Mammary epithelial cell (primary cell): ENCODE measurements at regions of chr7 and their contacts with region 1.

Region 1: DNA sequence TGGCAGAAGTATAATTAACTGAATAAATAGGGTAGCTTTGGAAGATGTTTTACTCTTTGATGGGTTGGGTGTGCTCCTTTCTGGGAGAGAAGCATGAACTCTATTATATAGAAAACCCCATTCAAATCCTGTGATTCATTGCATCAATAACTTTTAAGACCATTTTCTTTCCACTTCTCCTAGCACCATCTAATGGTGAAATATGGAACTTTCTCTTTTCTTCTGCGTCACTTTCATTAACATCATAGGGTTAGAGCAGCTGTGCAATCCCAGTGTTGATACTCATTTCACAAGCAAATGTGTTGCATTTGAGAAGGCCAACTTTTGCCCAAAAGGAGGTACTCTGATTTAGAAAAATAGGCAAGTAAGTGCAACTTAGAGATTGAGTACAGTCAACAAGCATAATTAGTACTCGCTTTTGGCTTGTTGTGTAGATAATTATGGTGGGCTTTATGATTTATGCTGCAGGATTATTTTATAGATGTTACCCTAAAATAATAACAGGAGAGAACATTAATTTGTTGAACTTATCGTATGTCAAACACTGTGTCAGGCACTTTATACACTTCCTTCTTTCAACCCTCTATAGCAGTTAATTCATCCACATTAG is 92.9 kb downstream of the CPED1 start:
- DNase-seq: peak; percentile 67
- H3K4me3 ChIP-seq: no peak overlapping the region
- H3K27ac ChIP-seq: no peak overlapping the region
- H3K4me1 ChIP-seq: peaks cover 50% of the 10 kb centered on the region
- H3K27me3 ChIP-seq: no peaks in the 10 kb centered on the region
- CTCF ChIP-seq: peak; percentile 60 to 70

Region 2: GRCh38 chr7:120792091-120792860 is 289.2 kb before region 1 on chr7:
- CTCF ChIA-PET with region 1: no interaction called
- dilution Hi-C with region 1: no loop called
- in situ Hi-C with region 1: no loop called
- intact Hi-C with region 1: loop called (anchors 2 kb)
- DNase-seq: peak; percentile 40
- H3K4me3 ChIP-seq: no peak overlapping the region
- H3K27ac ChIP-seq: no peak overlapping the region
- H3K4me1 ChIP-seq: peaks cover 7% of the 10 kb centered on the region
- H3K27me3 ChIP-seq: peaks cover 2% of the 10 kb centered on the region
- CTCF ChIP-seq: peak; percentile 71 to 75

Region 3: GRCh38 chr7:120987683-120988590 is 93.5 kb before region 1 on chr7:
- CTCF ChIA-PET with region 1: interaction called, 10 read pairs
- dilution Hi-C with region 1: no loop called
- in situ Hi-C with region 1: loop called (anchors 10 kb)
- intact Hi-C with region 1: loop called (anchors 1 kb)
- DNase-seq: peak; percentile 77
- H3K4me3 ChIP-seq: peak overlapping the region; percentile 32 to 40 (median 36)
- H3K27ac ChIP-seq: no peak overlapping the region
- H3K4me1 ChIP-seq: peaks cover 12% of the 10 kb centered on the region
- H3K27me3 ChIP-seq: no peaks in the 10 kb centered on the region
- CTCF ChIP-seq: peak; percentile 94 to 95

Region 4: DNA sequence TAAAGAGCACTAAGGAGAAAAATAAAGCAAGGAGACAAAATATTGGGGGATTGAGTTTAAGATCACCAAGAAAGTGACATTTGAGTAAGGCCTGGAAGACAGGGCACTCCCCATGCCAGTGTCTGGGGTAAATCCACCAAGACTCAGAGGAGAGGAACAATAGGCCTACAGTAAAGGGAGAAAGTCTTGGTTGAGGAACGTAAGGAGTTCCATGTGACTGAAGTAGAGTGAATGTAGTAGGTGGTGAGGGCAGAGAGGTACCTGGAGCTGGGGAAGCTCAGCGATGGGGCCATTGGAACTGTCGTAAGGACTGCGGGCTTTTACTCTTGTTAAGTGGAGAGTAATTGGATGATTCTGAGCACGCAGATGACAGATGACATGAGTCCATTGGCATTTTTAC is 23.6 kb before region 1 on chr7:
- CTCF ChIA-PET with region 1: no interaction called
- dilution Hi-C with region 1: no loop called
- in situ Hi-C with region 1: no loop called
- intact Hi-C with region 1: loop called (anchors 2 kb)
- DNase-seq: no peak
- H3K4me3 ChIP-seq: no peak overlapping the region
- H3K27ac ChIP-seq: no peak overlapping the region
- H3K4me1 ChIP-seq: no peaks in the 10 kb centered on the region
- H3K27me3 ChIP-seq: no peaks in the 10 kb centered on the region
- CTCF ChIP-seq: no peak

Region 5: GRCh38 chr7:121107923-121108498 is 26.6 kb after region 1 on chr7:
- CTCF ChIA-PET with region 1: interaction called, 3 read pairs
- dilution Hi-C with region 1: no loop called
- in situ Hi-C with region 1: no loop called
- intact Hi-C with region 1: loop called (anchors 1 kb)
- DNase-seq: peak; percentile 50
- H3K4me3 ChIP-seq: no peak overlapping the region
- H3K27ac ChIP-seq: no peak overlapping the region
- H3K4me1 ChIP-seq: peaks cover 3% of the 10 kb centered on the region
- H3K27me3 ChIP-seq: no peaks in the 10 kb centered on the region
- CTCF ChIP-seq: peak; percentile 75 to 78